ENCODE measurements at regions of chr6 and their contacts with region 1.

Region 1: GRCh38 chr6:137313928-137314855 is 95.0 kb upstream of the IFNGR1 start:
- DNase-seq: peak; percentile 83
- ATAC-seq: peak; percentile 61
- H3K4me3 Mint-ChIP-seq: no peak overlapping the region
- H3K27ac Mint-ChIP-seq: no peak overlapping the region
- H3K4me1 Mint-ChIP-seq: peaks cover 2% of the 10 kb centered on the region
- H3K27me3 Mint-ChIP-seq: no peaks in the 10 kb centered on the region
- CTCF ChIP-seq: peak; percentile 74

Region 2: GRCh38 chr6:137076277-137077068 is 237.7 kb before region 1 on chr6:
- CTCF ChIA-PET with region 1: interaction called, 14 read pairs
- POLR2A ChIA-PET with region 1: no interaction called
- intact Hi-C with region 1: no loop called
- DNase-seq: peak; percentile 70
- ATAC-seq: peak; percentile 90
- H3K4me3 Mint-ChIP-seq: no peak overlapping the region
- H3K27ac Mint-ChIP-seq: no peak overlapping the region
- H3K4me1 Mint-ChIP-seq: no peaks in the 10 kb centered on the region
- H3K27me3 Mint-ChIP-seq: peaks cover 7% of the 10 kb centered on the region
- CTCF ChIP-seq: peak; percentile 64

Region 3: DNA sequence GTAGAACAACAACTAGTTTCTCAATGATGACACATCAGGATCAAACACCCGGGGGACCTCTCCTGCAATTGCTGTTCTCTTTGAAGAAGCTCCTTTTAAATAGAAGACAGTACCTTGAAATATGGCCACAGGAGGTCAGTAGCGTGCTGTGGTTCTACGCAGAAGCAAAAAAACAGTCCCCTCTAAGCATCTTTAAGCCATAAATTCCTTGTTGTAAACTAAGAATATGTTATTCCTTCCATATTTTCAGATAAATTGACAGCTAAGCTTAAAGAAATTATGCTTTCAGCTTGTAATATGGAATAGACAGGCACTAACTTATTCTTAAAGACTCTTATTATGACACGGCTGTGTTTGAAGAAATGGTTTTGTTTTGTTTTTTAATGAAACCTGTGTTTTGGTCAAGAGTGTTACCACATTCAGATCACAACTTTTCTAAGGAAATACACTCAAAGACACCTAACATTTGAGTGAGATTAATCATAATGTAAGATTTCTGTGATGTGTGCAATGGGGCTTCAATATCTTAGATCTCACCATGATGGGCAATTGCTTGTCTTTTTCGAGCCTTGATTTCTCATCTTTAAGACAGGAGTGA is 219.7 kb before region 1 on chr6:
- CTCF ChIA-PET with region 1: interaction called, 49 read pairs
- POLR2A ChIA-PET with region 1: no interaction called
- intact Hi-C with region 1: loop called (anchors 1 kb)
- DNase-seq: peak; percentile 78
- ATAC-seq: peak; percentile 79
- H3K4me3 Mint-ChIP-seq: no peak overlapping the region
- H3K27ac Mint-ChIP-seq: no peak overlapping the region
- H3K4me1 Mint-ChIP-seq: peaks cover 22% of the 10 kb centered on the region
- H3K27me3 Mint-ChIP-seq: peaks cover 3% of the 10 kb centered on the region
- CTCF ChIP-seq: peak; percentile 70

Region 4: GRCh38 chr6:137271245-137272183 is 42.7 kb before region 1 on chr6:
- CTCF ChIA-PET with region 1: interaction called, 29 read pairs
- POLR2A ChIA-PET with region 1: no interaction called
- intact Hi-C with region 1: loop called (anchors 5 kb)
- DNase-seq: no peak
- ATAC-seq: peak; percentile 74
- H3K4me3 Mint-ChIP-seq: no peak overlapping the region
- H3K27ac Mint-ChIP-seq: no peak overlapping the region
- H3K4me1 Mint-ChIP-seq: peaks cover 10% of the 10 kb centered on the region
- H3K27me3 Mint-ChIP-seq: peaks cover 6% of the 10 kb centered on the region
- CTCF ChIP-seq: peak; percentile 90

Region 5: GRCh38 chr6:137277971-137278637 is 36.1 kb before region 1 on chr6:
- CTCF ChIA-PET with region 1: interaction called, 13 read pairs
- POLR2A ChIA-PET with region 1: no interaction called
- intact Hi-C with region 1: loop called (anchors 5 kb)
- DNase-seq: no peak
- ATAC-seq: no peak
- H3K4me3 Mint-ChIP-seq: no peak overlapping the region
- H3K27ac Mint-ChIP-seq: no peak overlapping the region
- H3K4me1 Mint-ChIP-seq: no peaks in the 10 kb centered on the region
- H3K27me3 Mint-ChIP-seq: peaks cover 9% of the 10 kb centered on the region
- CTCF ChIP-seq: no peak

Region 6: GRCh38 chr6:137297887-137298286 is 16.3 kb before region 1 on chr6:
- CTCF ChIA-PET with region 1: interaction called, 11 read pairs
- POLR2A ChIA-PET with region 1: no interaction called
- intact Hi-C with region 1: no loop called
- DNase-seq: no peak
- ATAC-seq: no peak
- H3K4me3 Mint-ChIP-seq: no peak overlapping the region
- H3K27ac Mint-ChIP-seq: no peak overlapping the region
- H3K4me1 Mint-ChIP-seq: no peaks in the 10 kb centered on the region
- H3K27me3 Mint-ChIP-seq: no peaks in the 10 kb centered on the region
- CTCF ChIP-seq: no peak

Region 7: GRCh38 chr6:137415127-137415833 is 101.1 kb after region 1 on chr6:
- CTCF ChIA-PET with region 1: interaction called, 17 read pairs
- POLR2A ChIA-PET with region 1: no interaction called
- intact Hi-C with region 1: no loop called
- DNase-seq: peak; percentile 76
- ATAC-seq: peak; percentile 97
- H3K4me3 Mint-ChIP-seq: peak overlapping the region; percentile 72
- H3K27ac Mint-ChIP-seq: peak overlapping the region; percentile 58
- H3K4me1 Mint-ChIP-seq: peaks cover 8% of the 10 kb centered on the region
- H3K27me3 Mint-ChIP-seq: no peaks in the 10 kb centered on the region
- CTCF ChIP-seq: peak; percentile 78

Region 8: DNA sequence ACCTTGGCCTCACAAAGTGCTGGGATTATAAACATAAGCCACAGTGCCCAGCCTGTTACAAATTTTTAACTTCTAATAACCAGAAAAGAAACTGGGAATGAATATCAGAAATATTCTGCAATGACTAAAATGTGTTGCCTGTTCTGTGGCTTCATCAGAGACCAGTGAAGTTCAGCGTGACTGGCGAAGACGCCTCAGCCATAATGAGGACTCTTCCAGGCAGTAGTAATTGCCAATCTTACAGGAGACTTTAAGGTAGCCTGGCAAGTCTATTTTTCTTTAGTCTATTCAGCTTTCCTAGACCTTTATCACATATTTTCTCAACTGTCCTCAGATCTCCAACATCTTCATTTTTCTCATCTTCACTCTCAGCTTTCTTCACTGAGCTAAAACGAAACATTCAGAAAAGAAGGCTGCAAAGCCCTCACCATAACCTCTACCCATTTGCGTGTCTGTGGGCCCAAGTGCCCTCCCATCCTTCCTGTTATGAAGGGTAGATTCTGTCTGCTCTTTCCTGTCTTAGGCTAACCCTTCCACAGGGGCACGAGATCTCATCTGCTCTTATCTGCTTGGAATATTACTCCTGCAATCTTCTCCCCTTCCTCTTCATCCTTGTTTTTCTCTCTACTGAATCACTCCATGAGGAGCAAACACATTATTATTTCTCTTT is 222.0 kb after region 1 on chr6:
- CTCF ChIA-PET with region 1: no interaction called
- POLR2A ChIA-PET with region 1: no interaction called
- intact Hi-C with region 1: no loop called
- DNase-seq: peak; percentile 32
- ATAC-seq: peak; percentile 67
- H3K4me3 Mint-ChIP-seq: no peak overlapping the region
- H3K27ac Mint-ChIP-seq: no peak overlapping the region
- H3K4me1 Mint-ChIP-seq: no peaks in the 10 kb centered on the region
- H3K27me3 Mint-ChIP-seq: peaks cover 2% of the 10 kb centered on the region
- CTCF ChIP-seq: no peak

Measured in activated CD8-positive, alpha-beta T cell treated with anti-CD3 and anti-CD28 coated beads for 36 hours (primary cell).